ENCODE measurements at regions of chr3 and their contacts with region 1.

Region 1: DNA sequence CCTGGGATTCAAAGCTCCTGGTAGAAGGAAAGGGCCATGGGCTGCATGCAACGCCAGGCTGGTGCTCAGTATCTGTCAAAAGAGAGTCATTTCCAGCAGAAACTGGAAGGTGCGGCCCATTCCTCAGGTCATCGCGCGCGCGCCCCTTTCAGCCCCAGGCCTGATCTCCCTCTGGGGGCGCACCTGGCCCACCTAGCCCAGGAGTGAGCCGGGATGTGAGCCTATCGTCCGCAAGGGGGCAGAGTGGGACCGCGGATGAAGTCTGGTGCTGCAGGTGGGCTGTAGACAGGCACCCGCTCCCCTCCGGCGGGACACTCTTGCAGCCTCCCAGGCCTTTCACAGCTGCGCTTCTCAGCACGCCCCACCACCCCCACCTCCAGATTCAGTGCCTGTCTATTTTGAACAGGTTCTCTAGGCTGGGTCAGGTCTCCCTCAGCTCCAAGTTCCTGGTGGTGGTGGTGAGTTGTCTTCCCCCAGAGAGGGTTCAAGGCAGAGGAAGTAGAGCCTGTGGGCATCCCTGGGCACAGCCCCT is 5.8 kb upstream of the RPL29 start:
- DNase-seq: peak; percentile 85
- ATAC-seq: peak; percentile 82
- H3K4me3 ChIP-seq: peak overlapping the region; percentile 11; the same call in 1 of the 2 replicates
- H3K27ac ChIP-seq: no peak overlapping the region
- H3K4me1 ChIP-seq: peaks cover 10% of the 10 kb centered on the region
- H3K27me3 ChIP-seq: no peaks in the 10 kb centered on the region
- CTCF ChIP-seq: peak; percentile 99

Region 2: DNA sequence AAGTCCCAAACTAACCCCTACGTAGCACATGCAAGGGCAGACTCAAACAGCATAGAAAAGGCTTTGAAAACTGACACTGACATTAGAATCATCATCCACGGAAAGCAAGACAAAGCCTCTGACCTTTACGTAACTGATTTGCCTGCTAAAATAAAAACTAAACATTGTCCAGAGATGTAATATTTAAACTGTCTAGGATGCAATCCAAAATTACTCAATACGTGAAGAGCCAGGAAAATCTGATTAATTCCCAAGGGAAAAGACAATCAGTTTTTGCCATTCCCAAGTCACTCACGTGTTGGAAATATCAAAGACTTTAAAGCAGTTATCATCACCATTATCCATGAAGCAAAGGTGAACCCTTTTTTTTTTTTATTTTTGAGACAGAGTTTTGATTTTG is 85.1 kb before region 1 on chr3:
- CTCF ChIA-PET with region 1: no interaction called
- POLR2A ChIA-PET with region 1: no interaction called
- intact Hi-C with region 1: no loop called
- DNase-seq: no peak
- ATAC-seq: no peak
- H3K4me3 ChIP-seq: no peak overlapping the region
- H3K27ac ChIP-seq: no peak overlapping the region
- H3K4me1 ChIP-seq: no peaks in the 10 kb centered on the region
- H3K27me3 ChIP-seq: no peaks in the 10 kb centered on the region
- CTCF ChIP-seq: no peak

Region 3: DNA sequence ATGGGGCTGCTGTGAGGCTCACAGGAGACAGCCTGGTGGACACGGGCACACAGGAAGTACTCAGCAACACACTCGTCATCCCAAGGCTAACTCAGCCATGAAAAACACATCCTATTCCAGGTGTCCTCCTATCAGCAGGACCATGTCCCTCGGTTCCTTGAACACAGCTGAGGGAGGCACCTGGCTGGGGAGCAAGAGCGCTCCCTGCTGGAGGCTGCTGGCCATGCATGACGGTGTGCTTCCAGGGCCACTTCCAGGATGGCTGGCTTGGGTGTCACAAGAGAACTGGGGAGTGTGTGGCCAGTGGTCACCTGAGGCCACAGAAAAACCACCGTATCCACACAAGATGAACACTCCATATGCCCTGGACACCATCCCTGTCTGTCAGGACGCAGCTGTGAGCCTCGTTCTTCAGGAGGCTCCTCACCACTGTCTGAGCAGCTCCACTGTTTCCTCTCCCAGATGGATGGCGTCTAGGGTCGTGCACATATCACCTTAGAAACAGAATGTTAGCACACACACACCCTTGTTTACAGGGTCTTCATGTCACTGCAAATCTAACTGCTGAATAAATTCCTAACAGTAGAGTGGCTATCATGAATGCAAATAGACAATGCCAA is 121.7 kb after region 1 on chr3:
- CTCF ChIA-PET with region 1: interaction called, 8 read pairs
- POLR2A ChIA-PET with region 1: no interaction called
- intact Hi-C with region 1: loop called (anchors 1 kb)
- DNase-seq: peak; percentile 77
- ATAC-seq: peak; percentile 77
- H3K4me3 ChIP-seq: no peak overlapping the region
- H3K27ac ChIP-seq: no peak overlapping the region
- H3K4me1 ChIP-seq: peaks cover 7% of the 10 kb centered on the region
- H3K27me3 ChIP-seq: no peaks in the 10 kb centered on the region
- CTCF ChIP-seq: peak; percentile 95